ENCODE measurements at regions of chr9 and their contacts with region 1.

Region 1: GRCh38 chr9:81771571-81771970 is 82.2 kb upstream of the TLE1 start:
- DNase-seq: no peak
- ATAC-seq: no peak

Region 2: DNA sequence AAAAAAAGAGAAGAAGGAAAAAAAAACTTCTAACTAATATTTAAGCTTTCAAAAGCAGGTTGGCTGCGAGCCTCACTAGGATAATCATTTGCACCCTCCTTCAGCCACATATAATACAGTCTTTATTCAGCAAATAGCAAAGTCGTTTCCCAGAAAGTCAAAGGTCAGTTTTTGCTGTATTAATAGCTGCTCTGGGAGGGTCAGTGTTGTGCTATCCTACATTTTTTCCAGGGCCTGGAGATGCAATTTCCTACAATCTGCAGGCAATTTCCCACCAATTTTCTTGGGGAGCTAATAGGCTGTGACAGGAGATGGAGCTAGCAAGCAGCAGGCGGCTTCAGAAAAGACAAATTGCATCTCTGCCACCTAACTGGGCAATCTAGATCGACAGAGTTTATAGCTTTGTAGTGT is 219.0 kb before region 1 on chr9:
- intact Hi-C with region 1: no loop called
- DNase-seq: no peak
- ATAC-seq: peak; percentile 46

Region 3: DNA sequence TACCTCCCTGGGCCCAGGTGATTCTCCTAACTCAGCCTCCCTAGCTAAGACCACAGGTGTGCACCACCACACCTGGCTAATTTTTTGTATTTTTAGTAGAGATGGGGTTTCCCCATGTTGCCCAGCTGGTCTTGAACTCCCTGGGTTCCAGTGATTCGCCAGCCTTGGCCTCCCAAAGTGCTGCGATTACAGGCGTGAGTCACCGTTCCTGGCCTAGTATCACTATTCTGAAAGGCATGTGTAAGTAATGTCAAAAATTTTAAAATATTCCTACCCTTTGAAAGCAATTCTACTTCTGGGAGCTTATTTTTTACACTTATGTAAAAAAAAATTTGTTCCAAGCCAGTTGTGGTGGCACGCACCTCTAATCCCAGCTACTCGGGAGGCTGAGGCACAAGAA is 55.2 kb before region 1 on chr9:
- intact Hi-C with region 1: loop called (anchors 10 kb)
- DNase-seq: no peak
- ATAC-seq: no peak

Region 4: DNA sequence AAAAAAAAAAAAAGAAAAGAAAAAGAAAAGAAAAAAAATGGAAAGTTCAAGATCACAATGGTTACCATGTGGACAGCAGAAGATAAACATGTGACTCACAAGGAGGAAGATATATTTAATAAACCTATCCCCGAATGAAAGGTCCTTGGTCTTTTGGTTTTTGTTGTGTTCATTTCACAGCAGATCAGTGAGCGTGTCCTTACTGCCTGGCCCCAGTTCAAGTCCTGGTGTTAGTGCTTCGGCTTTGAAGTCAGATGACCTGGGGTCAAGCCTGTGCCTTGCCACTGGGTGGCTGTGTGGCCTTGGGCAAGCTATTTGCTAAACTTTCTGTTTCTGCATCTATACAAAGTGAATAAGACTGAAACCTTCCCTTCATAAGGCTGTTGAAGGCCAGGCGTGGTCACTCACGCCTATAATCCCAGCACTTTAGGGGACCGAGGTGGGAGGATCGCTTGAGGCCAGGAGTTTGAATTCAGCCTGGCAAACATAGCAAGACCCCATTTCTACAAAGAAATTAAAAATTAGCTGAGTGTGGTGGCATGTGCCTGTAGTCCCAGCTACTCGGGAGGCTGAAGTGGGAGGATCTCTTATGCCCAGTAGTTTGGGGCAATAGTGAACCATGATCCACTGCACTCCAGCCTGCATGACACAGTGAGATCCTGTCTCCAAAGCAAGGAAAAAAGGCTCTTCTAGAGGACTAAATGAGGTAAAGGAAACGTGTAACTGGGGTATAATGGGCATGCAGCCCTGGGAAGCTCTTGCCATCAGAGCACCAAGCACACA is 62.2 kb after region 1 on chr9:
- intact Hi-C with region 1: loop called (anchors 10 kb)
- DNase-seq: no peak
- ATAC-seq: no peak

Measured in Right ventricle myocardium inferior (tissue), 1 donor.